ENCODE measurements at regions of chr11 and their contacts with region 1.

Region 1: DNA sequence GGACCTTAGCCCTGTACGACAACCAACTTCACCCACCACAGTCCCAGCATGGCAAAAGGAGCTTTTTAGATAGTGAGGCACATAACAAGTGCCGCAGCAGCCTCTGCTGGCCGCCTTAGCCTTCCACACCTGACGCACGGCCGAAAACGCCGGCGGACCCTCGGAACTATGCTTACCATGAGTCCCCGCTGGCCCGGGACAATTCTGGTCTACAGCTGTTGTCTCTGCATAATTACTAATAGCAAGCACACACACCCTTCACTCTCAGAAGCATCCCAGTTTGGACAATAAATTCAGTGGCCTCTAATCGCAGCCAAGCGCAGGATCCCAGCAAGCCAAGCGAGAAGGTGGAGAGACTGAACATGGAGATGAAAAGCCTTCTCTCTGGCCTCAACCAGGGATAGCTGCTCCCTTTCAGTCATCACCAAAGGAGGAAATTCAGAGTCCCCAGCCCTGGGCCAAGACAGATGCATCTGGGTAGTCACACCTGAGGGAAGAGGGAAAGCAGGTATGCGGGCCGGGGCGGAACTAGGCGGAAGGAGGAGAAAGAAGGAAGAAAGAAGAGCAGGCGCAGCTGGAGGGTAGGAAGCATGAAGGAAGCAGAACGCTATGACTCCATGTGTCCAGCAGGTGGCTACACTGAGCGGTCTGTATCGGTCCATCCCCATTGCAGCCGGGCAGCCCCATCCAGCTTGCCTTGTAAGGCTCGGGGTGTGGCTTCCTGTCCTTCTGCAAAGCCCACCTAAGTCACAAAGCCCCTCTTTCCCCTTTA is 40.3 kb downstream of the BUD13 start:
- DNase-seq: peak in 1 of 2 experiments; percentile 45
- H3K4me3 ChIP-seq: no peak overlapping the region
- H3K27ac ChIP-seq: no peak overlapping the region
- H3K4me1 ChIP-seq: no peaks in the 10 kb centered on the region
- H3K27me3 ChIP-seq: peaks cover 49% of the 10 kb centered on the region
- CTCF ChIP-seq: peak; percentile 89

Region 2: DNA sequence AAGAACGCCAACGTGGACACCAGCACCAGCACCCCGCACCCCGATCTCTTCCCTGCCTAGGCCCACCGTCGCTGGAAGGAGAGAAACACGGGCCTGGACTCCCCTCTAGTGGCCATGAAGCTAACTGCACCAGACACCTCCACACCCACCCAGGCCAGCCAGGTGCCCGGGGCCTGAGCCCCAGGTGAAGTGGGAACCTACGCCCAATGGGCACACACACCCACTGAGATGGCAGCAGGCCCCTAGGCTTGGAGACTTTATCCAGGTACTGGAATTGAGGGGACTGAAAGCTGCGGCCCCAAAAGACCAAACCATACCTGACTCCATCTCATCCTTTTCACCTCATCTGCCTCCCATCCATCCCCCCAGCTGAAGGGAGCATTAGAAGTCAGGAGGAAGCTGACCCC is 40.7 kb before region 1 on chr11:
- CTCF ChIA-PET with region 1: no interaction called
- POLR2A ChIA-PET with region 1: no interaction called
- intact Hi-C with region 1: no loop called
- DNase-seq: peak in 1 of 2 experiments; percentile 44
- H3K4me3 ChIP-seq: no peak overlapping the region
- H3K27ac ChIP-seq: no peak overlapping the region
- H3K4me1 ChIP-seq: peaks cover 2% of the 10 kb centered on the region; the same call in 1 of the 2 replicates
- H3K27me3 ChIP-seq: peaks cover 21% of the 10 kb centered on the region
- CTCF ChIP-seq: peak; percentile 98

Region 3: DNA sequence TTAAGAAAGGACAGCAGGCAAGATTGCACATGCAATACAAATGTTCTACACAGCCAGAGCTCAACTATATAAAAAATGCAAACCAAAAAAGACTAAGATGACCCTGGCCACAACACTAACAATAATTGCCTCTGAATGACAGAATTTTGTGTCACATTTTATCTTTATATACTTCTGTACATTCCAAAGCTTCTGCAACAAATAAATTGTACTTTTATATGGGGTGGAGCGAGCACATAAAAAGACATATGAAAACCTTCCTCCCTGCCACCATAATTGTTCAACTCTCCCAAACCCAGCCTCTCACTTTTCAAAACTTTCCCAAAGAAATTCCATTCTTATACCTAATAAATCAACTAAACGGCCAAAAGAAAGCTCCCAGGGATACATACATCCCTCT is 29.7 kb after region 1 on chr11:
- CTCF ChIA-PET with region 1: interaction called, 15 read pairs
- POLR2A ChIA-PET with region 1: interaction called, 19 read pairs
- intact Hi-C with region 1: no loop called
- DNase-seq: no peak
- H3K4me3 ChIP-seq: no peak overlapping the region
- H3K27ac ChIP-seq: no peak overlapping the region
- H3K4me1 ChIP-seq: no peaks in the 10 kb centered on the region
- H3K27me3 ChIP-seq: no peaks in the 10 kb centered on the region
- CTCF ChIP-seq: no peak

Measured in PC-9 (cell line).